ENCODE measurements at regions of chr19 and their contacts with region 1.

Region 1: GRCh38 chr19:33302175-33302973 is at the start of gene CEBPA:
- DNase-seq: peak; percentile 93 to 95
- ATAC-seq: peak; percentile 83 to 92
- H3K4me3 ChIP-seq: peak within 1 kb of the TSS; percentile 63
- H3K27ac ChIP-seq: peak within 1 kb of the TSS; percentile 86 to 93
- H3K4me1 ChIP-seq: peaks cover 11% of the 10 kb centered on the region
- CTCF ChIP-seq: peak; percentile 99
- EP300 ChIP-seq: no peak
- POLR2A ChIP-seq: peak; percentile 100
- RAD21 ChIP-seq: no peak; a peak in 3 of 5 replicates
- polyA plus RNA-seq, gene CEBPA: 3.5 and 4.3 TPM in 2 replicates

Region 2: DNA sequence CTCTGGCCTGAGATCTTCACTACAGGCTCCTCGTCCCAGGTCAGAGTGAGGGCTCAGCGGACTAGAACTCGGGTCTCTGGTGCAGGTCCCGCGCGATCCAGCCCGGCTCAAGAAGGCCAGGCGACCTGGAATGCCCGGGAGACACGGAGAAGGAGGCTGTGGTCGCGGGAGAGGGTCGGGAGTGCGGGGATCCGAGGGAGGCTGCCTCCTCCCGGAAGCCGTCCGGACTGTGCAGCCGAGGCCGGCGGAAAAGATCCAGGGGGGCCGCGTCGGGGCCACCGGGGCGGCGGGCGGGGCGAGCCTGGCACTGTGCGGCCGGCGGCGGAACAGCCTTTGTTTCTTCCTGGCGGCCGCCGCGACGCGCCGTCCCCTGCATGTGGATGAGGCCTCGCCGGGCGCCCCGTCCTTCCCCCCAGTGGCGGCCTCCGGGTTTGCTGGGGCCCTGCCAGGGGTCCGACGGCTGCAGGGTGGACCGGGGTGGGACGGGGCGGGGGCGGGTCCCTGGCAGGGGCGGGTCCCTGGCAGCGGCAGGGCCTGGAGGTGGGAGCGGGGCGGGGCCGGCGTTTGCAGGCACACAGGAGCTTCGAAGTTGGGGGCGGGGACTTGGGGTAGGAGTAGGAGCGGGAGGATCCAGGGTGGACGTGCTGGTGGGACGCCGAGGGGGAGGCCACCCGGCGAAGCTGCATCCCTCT is 75.7 kb before region 1 on chr19:
- CTCF ChIA-PET with region 1: interaction called, 12 read pairs
- POLR2A ChIA-PET with region 1: no interaction called
- DNase-seq: peak; percentile 63 to 67
- ATAC-seq: peak; percentile 32 to 69
- H3K4me3 ChIP-seq: peak overlapping the region; percentile 37
- H3K27ac ChIP-seq: peak overlapping the region; percentile 12 to 56; a peak in 3 of 6 replicates
- H3K4me1 ChIP-seq: peaks cover 16% of the 10 kb centered on the region
- CTCF ChIP-seq: no peak
- EP300 ChIP-seq: no peak
- POLR2A ChIP-seq: no peak
- RAD21 ChIP-seq: no peak

Region 3: GRCh38 chr19:33254245-33254824 is 48.0 kb before region 1 on chr19:
- CTCF ChIA-PET with region 1: interaction called, 603 read pairs
- POLR2A ChIA-PET with region 1: interaction called, 17 read pairs
- DNase-seq: no peak
- ATAC-seq: peak; percentile 11 to 24; a peak in 3 of 6 replicates
- H3K4me3 ChIP-seq: no peak overlapping the region
- H3K27ac ChIP-seq: no peak overlapping the region
- H3K4me1 ChIP-seq: peaks cover 8% of the 10 kb centered on the region
- CTCF ChIP-seq: no peak
- EP300 ChIP-seq: no peak
- POLR2A ChIP-seq: no peak
- RAD21 ChIP-seq: no peak

Region 4: DNA sequence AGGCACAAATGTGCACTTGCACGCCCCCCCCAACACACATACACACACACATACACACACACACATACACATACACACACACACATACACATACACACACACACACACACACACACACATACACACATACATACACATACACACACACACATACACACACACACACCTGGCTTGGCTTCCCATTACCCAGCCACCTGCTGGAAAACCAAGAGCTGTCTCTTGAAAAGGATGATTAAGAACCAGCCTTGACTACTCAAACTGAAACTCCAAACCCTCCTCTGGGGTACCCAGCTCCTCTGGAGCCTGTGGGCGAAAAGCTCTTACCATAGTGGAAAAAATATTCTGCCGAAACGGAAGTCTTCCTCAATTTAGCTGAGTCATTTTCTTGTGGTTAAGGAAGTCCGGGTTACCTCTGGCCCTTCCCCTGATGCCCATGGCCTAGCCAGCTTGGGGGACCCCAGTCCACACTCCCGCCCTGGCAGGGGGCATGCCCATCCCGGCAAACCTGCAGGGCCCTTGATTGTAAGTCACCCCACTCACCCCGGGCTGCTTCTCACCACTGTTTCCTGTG is 21.9 kb before region 1 on chr19:
- CTCF ChIA-PET with region 1: interaction called, 33 read pairs
- POLR2A ChIA-PET with region 1: interaction called, 8 read pairs
- DNase-seq: no peak
- ATAC-seq: no peak
- H3K4me3 ChIP-seq: no peak overlapping the region
- H3K27ac ChIP-seq: peak overlapping the region; percentile 40 to 70; a peak in 4 of 6 replicates
- H3K4me1 ChIP-seq: peaks cover 14% of the 10 kb centered on the region
- CTCF ChIP-seq: no peak
- EP300 ChIP-seq: no peak
- POLR2A ChIP-seq: no peak
- RAD21 ChIP-seq: no peak

Region 5: GRCh38 chr19:33350538-33351309 is 48.4 kb after region 1 on chr19:
- CTCF ChIA-PET with region 1: interaction called, 10 read pairs
- POLR2A ChIA-PET with region 1: interaction called, 5 read pairs
- DNase-seq: peak in 1 of 2 experiments; percentile 40
- ATAC-seq: peak; percentile 22 to 32; a peak in 2 of 6 replicates
- H3K4me3 ChIP-seq: no peak overlapping the region
- H3K27ac ChIP-seq: no peak overlapping the region
- H3K4me1 ChIP-seq: no peaks in the 10 kb centered on the region
- CTCF ChIP-seq: no peak
- EP300 ChIP-seq: no peak
- POLR2A ChIP-seq: no peak
- RAD21 ChIP-seq: no peak

Region 6: GRCh38 chr19:33388725-33389420 is 86.5 kb after region 1 on chr19:
- CTCF ChIA-PET with region 1: interaction called, 23 read pairs
- POLR2A ChIA-PET with region 1: interaction called, 15 read pairs
- DNase-seq: no peak
- ATAC-seq: no peak
- H3K4me3 ChIP-seq: no peak overlapping the region
- H3K27ac ChIP-seq: no peak overlapping the region
- H3K4me1 ChIP-seq: peaks cover 20% of the 10 kb centered on the region; the same call in 2 of the 3 replicates
- CTCF ChIP-seq: no peak
- EP300 ChIP-seq: no peak
- POLR2A ChIP-seq: no peak
- RAD21 ChIP-seq: no peak